ENCODE measurements at regions of chr1 and their contacts with region 1.

Region 1: GRCh38 chr1:203273206-203273868 is 32.0 kb upstream of the BTG2 start:
- DNase-seq: peak; percentile 86 to 94 (median 88)
- ATAC-seq: peak; percentile 50 to 76 (median 62)
- H3K4me3 ChIP-seq: peak overlapping the region in 10 of 12 donors; percentile 29 to 54 (median 40)
- H3K27ac ChIP-seq: peak overlapping the region; percentile 8 to 98 (median 89)
- H3K4me1 ChIP-seq: peaks cover 7 to 81% (median 57%) of the 10 kb centered on the region in 12 donors
- H3K27me3 ChIP-seq: no peaks in the 10 kb centered on the region
- CTCF ChIP-seq: peak; percentile 95 to 100 (median 98)
- POLR2A ChIP-seq: peak in 1 of 2 donors; percentile 34

Region 2: DNA sequence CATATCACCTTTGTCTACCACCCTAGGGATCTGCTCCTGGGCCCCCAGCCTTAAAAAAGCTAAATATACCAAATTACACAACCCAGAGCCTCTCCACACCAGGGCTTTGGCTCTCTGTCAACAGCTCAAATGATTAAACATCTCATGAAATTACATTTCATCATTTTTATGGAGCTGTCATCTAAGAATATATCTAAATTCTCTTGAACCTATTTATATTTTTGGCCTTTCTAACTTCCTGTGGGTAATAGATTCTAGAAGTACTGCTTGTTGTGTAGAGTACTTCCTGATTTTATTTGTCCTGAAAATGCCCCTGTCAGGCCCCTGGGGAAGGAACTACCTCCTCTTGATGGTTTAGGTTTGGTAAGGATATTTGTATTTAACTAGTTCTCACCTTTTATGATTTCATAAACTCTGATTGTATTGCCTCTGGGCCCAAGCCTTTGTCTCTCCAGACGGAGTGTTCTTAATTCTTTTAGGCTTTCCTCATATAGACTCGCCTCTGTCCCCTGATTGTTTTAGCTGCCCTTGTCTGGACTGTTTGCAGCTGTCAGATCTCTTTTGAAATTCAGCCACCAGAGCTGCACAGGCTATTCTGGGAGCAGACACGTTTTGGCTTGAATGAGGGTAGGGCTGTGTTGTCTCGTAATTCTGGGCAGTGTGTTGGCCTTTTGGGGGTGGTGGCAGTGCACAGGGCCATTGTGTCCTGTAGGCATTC is 204.1 kb before region 1 on chr1:
- intact Hi-C with region 1: no loop called
- DNase-seq: peak in 4 of 5 donors; percentile 58 to 81 (median 65)
- ATAC-seq: peak; percentile 93 to 94 (median 93)
- H3K4me3 ChIP-seq: no peak overlapping the region
- H3K27ac ChIP-seq: peak overlapping the region; percentile 1 to 95 (median 84)
- H3K4me1 ChIP-seq: peaks cover 0 to 83% (median 30%) of the 10 kb centered on the region in 12 donors
- H3K27me3 ChIP-seq: no peaks in the 10 kb centered on the region
- CTCF ChIP-seq: no peak
- POLR2A ChIP-seq: no peak

Region 3: DNA sequence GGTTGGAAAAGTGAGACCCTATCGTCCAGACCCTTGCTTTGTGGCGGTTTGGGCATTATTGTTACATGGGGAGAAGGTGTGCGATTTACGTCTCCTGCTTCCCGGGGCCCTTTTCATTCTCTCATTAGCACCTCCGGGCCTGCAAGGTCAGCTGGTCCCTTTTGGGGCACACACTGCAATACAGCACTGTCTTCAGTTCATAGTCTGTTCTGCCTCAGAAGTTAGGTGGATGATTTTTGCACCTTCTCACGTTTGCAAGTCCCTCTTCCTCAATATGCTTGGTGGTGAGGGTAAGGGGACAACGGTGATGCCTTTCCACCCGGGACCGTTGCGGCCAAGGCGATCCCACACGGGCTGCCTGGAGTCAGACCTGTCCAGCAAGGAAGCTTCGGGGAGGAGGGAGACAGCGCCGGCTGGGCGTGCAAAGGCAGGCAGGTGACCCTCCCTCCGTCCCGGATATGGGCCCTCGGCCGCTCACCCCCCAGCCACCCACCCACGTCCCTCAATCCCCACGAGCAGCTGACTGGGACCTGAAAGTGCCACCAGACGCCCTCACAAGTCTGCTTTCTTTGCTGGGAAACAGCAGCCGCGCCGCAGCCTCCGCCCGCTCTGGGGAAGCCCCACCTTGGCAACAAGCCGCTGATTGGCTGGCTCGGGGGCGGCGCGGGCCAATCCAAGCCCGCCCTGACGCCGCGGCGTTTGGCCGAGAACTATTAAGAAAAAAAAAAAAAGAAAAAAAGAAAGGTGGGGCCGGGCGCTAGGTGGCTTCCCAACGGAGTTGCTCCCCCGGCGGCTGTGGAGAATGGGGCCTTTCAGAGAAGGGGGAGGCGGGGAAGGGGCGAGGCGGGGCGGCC is 53.7 kb after region 1 on chr1:
- intact Hi-C with region 1: loop called in 6 of 10 experiments (anchors 1 to 2 kb)
- DNase-seq: peak; percentile 95 to 98 (median 96)
- ATAC-seq: peak; percentile 89 to 92 (median 90)
- H3K4me3 ChIP-seq: peak overlapping the region in 11 of 12 donors; percentile 14 to 69 (median 61)
- H3K27ac ChIP-seq: peak overlapping the region; percentile 86 to 99 (median 94)
- H3K4me1 ChIP-seq: peaks cover 4 to 66% (median 57%) of the 10 kb centered on the region in 12 donors
- H3K27me3 ChIP-seq: no peaks in the 10 kb centered on the region
- CTCF ChIP-seq: no peak
- POLR2A ChIP-seq: peak; percentile 53 to 83

Region 4: DNA sequence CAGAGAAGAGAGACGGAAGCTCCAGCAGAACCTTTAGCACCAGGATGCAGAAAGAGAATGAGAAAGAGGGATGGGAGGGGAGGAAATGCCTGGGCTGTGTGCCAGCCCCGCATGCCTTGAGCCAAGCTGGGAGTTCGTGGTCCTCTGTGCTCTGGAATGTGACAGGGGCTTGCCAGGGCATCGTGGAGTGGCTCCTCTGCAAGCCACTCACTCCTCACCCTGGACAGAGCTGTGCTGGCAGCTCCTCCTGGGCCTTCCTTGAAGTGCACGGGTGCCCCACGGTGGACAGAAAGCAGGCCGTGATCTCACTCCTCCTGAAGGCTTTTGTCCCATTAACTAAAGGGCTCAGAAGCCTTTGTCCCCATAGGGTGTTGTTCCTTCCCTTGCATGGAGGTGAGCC is 167.4 kb after region 1 on chr1:
- intact Hi-C with region 1: loop called in 4 of 10 experiments (anchors 2 to 5 kb)
- DNase-seq: peak; percentile 70 to 85 (median 78)
- ATAC-seq: peak; percentile 92 to 97 (median 94)
- H3K4me3 ChIP-seq: no peak overlapping the region
- H3K27ac ChIP-seq: peak overlapping the region in 6 of 12 donors; percentile 1 to 77 (median 52)
- H3K4me1 ChIP-seq: peaks cover 0 to 45% (median 13%) of the 10 kb centered on the region in 12 donors
- H3K27me3 ChIP-seq: no peaks in the 10 kb centered on the region
- CTCF ChIP-seq: peak; percentile 40 to 76 (median 64)
- POLR2A ChIP-seq: no peak

Region 5: DNA sequence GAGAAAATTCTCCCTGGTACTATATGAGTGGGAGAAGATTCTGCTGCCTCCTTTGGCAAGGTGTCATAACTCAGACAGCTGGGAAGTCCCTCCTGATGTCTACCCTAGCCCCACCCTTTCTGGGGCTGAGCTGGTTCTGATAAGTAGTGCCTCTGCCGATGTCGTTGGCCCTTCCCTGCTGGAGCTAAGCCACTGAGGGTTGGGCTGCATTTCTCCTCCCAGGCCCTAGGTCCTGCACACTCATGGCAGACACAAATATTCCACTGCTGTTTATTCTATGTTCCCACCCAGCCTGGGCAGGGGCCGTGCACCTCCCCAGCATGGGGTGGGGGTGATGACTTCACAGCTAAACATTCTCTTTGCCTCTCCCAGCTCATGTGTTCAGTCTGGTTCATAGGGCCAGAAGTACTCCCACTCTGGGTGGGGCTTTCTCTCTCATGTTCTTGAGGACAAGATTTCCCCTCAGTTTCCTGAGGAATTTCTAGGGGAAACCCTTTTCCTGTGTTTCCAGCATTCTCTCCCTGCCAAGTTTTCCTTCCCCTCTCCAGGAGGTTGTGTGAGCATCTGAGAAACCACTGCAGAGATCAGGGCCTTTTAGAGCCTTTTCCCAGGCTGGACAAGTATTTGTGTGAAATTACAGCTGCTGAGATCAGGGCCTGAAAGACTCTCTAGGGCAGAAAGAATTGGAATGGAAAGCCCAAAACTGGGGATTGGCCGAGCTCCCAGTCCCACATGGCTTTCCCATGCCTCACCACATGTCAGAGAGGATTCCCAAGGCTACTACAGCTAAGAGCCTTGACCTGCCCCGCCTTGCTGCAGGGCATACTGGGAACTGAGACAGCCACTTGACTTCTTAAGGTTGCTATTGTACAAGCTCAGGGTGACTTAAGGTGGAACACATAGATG is 419.5 kb after region 1 on chr1:
- intact Hi-C with region 1: loop called in 1 of 10 experiments (anchors 10 kb)
- DNase-seq: peak; percentile 84 to 92 (median 87)
- ATAC-seq: peak; percentile 82 to 92 (median 88)
- H3K4me3 ChIP-seq: peak overlapping the region in 2 of 12 donors; percentile 1 to 3
- H3K27ac ChIP-seq: peak overlapping the region; percentile 42 to 89 (median 76)
- H3K4me1 ChIP-seq: peaks cover 10 to 89% (median 66%) of the 10 kb centered on the region in 12 donors
- H3K27me3 ChIP-seq: no peaks in the 10 kb centered on the region
- CTCF ChIP-seq: peak in 3 of 12 donors; percentile 8 to 17 (median 10)
- POLR2A ChIP-seq: peak in 1 of 2 donors; percentile 22

Measured in heart left ventricle (tissue), 16 donors.